ENCODE measurements at regions of chr17 and their contacts with region 1.

Region 1: GRCh38 chr17:65055348-65056261 is 935 bp downstream of the GNA13 start:
- DNase-seq: peak in 1 of 2 donors; percentile 93
- H3K4me3 ChIP-seq: peak overlapping the region; percentile 77 to 85
- H3K27ac ChIP-seq: peak overlapping the region; percentile 99
- H3K4me1 ChIP-seq: peaks cover 53% of the 10 kb centered on the region
- H3K27me3 ChIP-seq: no peaks in the 10 kb centered on the region
- CTCF ChIP-seq: no peak
- POLR2A ChIP-seq: peak in 1 of 2 donors; percentile 19

Region 2: DNA sequence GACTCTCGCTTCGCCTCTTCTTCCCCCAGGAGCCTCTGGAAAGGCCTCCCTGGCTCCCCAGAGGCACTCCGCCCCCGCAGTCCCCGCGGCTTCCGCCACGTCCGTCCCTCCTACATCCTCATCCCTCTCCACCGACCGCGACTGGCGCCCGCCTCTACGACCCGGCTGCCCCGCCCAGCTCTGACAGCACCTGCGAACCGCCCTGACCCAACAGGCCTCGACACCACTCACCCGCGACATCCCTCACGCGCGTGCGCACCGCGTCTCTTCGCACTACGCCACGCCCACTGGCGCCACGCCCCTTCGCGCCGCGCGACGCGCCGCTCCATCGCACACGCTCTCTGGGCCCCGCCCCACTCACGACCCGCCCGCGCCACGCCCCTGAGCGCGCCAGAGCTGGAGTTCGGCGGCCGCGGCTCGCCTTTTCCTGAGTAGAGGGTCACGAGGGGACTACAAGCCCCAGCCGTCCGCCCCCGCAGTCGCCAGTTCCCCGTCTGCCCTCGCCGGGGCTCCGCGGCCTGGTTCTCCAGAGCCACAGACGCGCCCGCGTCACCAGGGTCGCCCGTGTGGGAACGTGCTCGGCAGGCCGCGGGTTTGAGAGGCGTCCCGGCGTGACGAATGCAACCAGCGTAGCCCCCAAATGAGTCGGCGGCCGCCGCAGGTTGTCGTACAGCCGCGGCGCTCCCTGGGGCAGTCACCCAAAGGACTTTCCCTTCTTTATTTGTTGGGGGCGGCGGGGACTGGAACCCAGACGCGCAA is 80.1 kb before region 1 on chr17:
- intact Hi-C with region 1: loop called (anchors 5 kb)
- DNase-seq: peak in 1 of 2 donors; percentile 96
- H3K4me3 ChIP-seq: peak overlapping the region; percentile 74
- H3K27ac ChIP-seq: peak overlapping the region; percentile 96
- H3K4me1 ChIP-seq: peaks cover 23% of the 10 kb centered on the region
- H3K27me3 ChIP-seq: no peaks in the 10 kb centered on the region
- CTCF ChIP-seq: no peak
- POLR2A ChIP-seq: peak; percentile 78 to 95